Psoas muscle (tissue), 8 donors: ENCODE measurements at regions of chr3 and their contacts with region 1.

Region 1: DNA sequence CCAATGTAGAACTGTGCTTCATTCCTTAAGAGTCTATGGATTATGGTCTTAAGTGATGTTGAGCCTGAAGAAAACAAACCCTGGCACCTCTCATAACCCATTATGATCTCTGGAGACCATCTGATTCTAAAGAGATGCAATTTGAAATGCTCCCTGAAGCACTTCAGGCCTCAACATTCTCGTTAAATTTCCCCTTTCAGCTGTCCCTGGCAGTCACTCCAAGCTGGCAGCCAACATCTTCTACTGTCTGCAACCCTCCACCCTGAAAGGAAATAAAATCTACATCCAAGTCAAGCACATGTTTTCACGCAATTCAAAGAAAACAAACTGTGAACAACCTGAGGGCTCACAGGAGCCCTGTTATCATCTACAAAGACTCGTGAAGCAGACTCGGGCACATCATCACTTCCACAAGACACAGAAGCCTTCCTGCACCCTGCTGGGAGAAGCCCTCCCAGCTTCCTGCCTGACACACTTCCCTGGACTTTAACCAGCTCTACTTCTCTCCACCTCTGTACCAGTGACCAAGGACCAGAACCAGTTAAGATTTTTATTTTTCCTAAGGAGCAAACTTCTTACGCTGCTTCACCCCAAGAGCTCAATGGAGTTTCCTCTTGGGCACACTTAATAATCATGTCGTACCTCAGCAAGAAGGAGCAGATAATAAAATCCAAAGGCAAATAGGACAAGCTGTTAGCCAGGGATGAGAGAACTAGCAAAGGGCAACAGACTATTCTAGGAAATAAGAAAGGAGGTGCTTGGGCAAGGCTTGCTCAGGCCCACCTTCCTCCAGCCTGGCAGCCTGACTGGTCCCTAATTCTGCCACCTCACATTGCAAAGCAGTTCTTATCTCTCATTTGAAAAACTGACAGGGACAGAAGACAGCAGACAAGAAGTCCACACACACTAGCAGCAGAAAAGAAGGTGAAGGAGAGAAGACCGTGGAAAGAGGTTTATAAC is 67.1 kb downstream of the MAGI1 start:
- DNase-seq: no peak
- ATAC-seq: no peak
- H3K4me3 ChIP-seq: no peak overlapping the region
- H3K27ac ChIP-seq: no peak overlapping the region
- H3K4me1 ChIP-seq: peaks cover 9% of the 10 kb centered on the region
- H3K27me3 ChIP-seq: no peaks in the 10 kb centered on the region
- CTCF ChIP-seq: no peak

Region 2: GRCh38 chr3:65894679-65895453 is 76.7 kb before region 1 on chr3:
- intact Hi-C with region 1: loop called in 1 of 2 experiments (anchors 2 kb)
- DNase-seq: no peak
- ATAC-seq: peak; percentile 23 to 96 (median 87)
- H3K4me3 ChIP-seq: no peak overlapping the region
- H3K27ac ChIP-seq: no peak overlapping the region
- H3K4me1 ChIP-seq: no peaks in the 10 kb centered on the region
- H3K27me3 ChIP-seq: no peaks in the 10 kb centered on the region
- CTCF ChIP-seq: no peak